ENCODE measurements at regions of chr12 and their contacts with region 1.

Region 1: GRCh38 chr12:46209914-46210872 is 58.6 kb downstream of the SLC38A1 start:
- DNase-seq: no peak

Region 2: GRCh38 chr12:46230983-46231382 is 20.8 kb after region 1 on chr12:
- intact Hi-C with region 1: loop called in 1 of 2 experiments (anchors 1 kb)
- DNase-seq: no peak

Region 3: DNA sequence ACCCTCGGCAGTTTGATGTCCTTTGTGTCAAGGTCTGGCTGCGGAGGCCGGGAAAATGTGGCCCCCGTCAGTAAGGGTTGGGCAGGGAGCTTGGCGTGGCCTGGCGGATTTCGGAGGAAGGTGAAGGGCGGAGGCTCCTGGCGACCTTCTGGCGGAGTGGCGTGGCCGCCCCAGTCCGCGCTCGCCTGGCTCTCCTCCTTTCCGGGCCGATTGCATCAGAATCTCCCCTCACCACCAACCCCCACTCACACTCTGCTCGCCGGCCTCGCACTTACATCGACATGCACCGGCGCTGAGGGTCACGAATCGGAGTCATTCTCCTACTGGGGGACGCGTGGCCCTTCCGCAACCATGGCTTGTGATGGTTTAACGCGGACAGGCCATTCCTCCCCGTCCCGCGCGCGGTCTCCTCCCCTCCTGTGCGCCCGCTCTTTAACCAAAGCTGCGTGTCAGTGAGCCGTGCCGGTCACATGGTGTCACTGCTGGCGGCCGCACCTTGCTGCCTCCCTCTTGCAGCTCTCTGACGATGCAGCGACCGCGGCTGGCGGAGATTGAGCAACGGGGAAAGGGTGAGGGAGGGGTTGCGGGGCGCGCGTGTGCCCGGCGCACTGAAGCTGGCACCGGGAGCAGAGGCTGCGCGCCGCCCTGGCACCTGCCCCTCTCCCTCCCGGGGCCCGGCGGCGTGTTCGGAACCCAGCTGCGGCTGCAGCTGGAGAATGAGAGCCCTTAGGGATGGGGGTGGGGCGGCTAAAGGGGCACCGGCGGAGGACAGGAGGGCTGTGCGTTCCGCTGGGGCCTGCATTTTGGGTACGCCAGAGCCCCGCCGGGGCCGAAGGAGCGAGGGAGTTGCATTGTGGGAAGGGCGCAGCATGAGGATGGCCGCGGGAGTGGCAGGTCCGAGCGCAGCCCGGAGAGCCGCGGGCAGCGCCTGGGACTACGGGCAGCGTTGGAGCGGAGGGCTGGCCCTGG is 58.7 kb after region 1 on chr12 and contains the start of gene SLC38A1:
- intact Hi-C with region 1: loop called in 1 of 2 experiments (anchors 10 kb)
- DNase-seq: peak; percentile 94
- total RNA-seq, gene SLC38A1: 74.4 to 88.0 TPM

Region 4: GRCh38 chr12:46357438-46358324 is 147.5 kb after region 1 on chr12:
- intact Hi-C with region 1: no loop called
- DNase-seq: no peak

Measured in posterior vena cava (tissue), 2 donors.